ENCODE measurements at regions of chr12 and their contacts with region 1.

Region 1: GRCh38 chr12:131928711-131929580 is at the start of gene PUS1:
- DNase-seq: peak; percentile 92 to 99 (median 96)

Region 2: DNA sequence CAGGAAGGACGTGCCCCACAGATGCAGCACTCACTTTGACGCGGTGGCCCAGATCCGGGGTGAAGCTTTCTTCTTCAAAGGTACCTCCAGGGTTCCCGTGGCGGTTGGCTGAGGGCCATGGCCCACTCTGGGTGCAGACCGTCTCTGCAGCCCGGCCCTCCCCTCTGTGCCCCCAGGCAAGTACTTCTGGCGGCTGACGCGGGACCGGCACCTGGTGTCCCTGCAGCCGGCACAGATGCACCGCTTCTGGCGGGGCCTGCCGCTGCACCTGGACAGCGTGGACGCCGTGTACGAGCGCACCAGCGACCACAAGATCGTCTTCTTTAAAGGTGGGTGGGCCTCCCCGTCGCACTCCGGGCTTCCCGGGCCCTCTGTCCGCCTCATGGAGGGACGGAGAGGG is 83.8 kb before region 1 on chr12:
- intact Hi-C with region 1: no loop called
- DNase-seq: no peak

Region 3: DNA sequence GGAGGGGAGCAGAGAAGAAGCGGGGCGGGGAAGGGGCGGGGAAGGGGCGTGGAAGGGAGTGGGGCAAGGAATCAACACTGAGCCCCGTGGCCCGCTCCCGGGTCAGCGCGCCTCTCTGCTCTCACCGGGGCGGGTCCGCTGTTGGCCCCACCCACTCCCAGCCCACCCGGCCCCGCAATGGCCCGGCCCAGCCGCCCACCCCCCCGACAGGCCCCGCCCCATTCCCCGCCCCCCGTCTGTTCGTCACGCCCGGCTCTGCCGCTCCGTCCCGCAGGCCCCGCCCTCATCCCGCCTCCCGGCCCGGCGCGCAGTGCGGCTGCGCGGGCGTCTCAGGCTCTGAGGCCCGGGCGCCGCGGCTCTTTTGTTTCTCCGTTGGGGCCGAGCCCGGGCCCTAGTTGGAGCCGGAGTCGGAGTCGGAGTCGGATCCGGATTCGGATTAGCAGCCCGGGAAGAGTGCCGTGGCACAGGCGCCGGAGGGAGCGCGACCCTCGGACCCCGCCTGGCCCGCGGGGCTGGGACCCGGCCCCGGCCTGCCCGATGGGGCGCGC is 34.6 kb before region 1 on chr12 and contains the start of gene ULK1:
- intact Hi-C with region 1: loop called (anchors 2 kb)
- DNase-seq: peak; percentile 84 to 99 (median 93)

Region 4: DNA sequence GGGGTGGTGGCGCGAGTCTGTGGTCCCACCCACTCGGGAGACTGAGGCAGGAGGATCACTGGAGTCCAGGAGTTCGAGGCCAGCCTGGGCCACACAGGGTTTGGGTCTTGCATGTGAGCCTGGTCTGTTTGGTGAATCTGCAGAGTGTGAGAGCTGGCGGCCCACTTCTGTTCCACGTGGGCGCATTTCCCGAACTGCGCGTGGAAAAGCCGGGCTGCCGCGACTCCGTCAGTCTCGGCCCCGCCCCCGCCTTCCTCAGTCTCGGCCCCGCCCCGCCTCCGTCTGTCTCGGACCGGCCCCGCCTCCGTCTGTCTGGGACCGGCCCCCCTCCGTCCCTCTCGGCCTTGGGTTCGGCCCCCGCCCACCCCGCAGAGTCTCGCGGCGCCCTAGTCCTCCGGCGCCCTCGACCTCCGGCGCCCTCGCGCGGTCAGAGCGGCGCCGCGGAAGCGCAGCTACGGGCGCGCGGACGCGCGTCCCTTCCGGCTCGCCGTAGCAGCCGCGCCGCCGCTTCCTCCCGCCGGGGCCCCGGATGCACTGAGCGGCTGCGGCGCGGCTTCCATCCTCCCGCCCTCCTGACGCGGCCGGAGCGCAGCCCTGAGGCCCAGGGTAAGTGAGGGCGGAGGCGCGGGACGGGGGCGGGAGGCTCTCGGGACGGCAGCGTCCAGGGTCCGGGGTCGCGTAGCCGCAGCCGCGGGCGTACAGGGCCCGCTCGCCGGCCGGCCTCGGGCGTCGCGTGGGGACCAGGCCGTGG is 20.7 kb after region 1 on chr12 and contains the start of gene EP400:
- intact Hi-C with region 1: loop called (anchors 1 kb)
- DNase-seq: peak; percentile 86 to 98 (median 90)